ENCODE measurements at regions of chr13 and their contacts with region 1.

Region 1: GRCh38 chr13:45047394-45048310 is 58.3 kb downstream of the GPALPP1 start:
- DNase-seq: peak; percentile 48 to 77 (median 60)
- ATAC-seq: peak; percentile 94
- H3K4me3 ChIP-seq: peak overlapping the region; percentile 38; the same call in 1 of the 2 replicates
- H3K27ac ChIP-seq: no peak overlapping the region
- H3K4me1 ChIP-seq: peaks cover 0 to 4% of the 10 kb centered on the region in 2 experiments; a peak in 3 of 5 replicates
- H3K27me3 ChIP-seq: no peaks in the 10 kb centered on the region
- CTCF ChIP-seq: peak; percentile 69 to 83 (median 82)
- EP300 ChIP-seq: no peak
- POLR2A ChIP-seq: no peak
- RAD21 ChIP-seq: peak; percentile 83 to 91

Region 2: GRCh38 chr13:45119991-45120864 is 72.6 kb after region 1 on chr13 and contains the start of gene GTF2F2:
- CTCF ChIA-PET with region 1: no interaction called
- POLR2A ChIA-PET with region 1: no interaction called
- in situ Hi-C with region 1: no loop called
- intact Hi-C with region 1: loop called (anchors 1 kb)
- DNase-seq: peak; percentile 84 to 88 (median 85)
- ATAC-seq: peak; percentile 84
- H3K4me3 ChIP-seq: peak within 1 kb of the TSS; percentile 87
- H3K27ac ChIP-seq: peak within 1 kb of the TSS; percentile 87
- H3K4me1 ChIP-seq: peaks cover 7 to 14% of the 10 kb centered on the region in 2 experiments; a peak in 3 of 5 replicates
- H3K27me3 ChIP-seq: no peaks in the 10 kb centered on the region
- CTCF ChIP-seq: no peak
- EP300 ChIP-seq: no peak
- POLR2A ChIP-seq: peak; percentile 86
- RAD21 ChIP-seq: no peak
- polyA plus RNA-seq, gene GTF2F2: 19.7 to 22.6 TPM

Region 3: DNA sequence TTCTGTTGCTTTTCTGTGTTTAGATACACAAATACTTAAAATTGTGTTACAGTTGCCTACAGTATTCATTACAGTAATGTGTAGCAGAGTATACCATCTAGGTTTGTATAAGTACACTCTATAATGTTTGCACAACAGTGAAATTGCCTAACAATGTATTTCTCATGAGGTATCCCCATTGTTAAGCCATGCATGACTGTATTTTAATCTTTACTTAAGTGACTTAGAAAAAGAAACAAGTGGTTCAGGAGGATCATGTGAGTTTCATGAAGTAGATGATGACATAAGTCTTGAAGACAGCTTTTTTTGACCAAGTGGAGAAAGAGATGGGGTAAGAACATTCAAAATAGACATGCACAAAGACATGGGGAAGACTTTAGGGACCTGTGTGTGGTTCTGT is 161.6 kb after region 1 on chr13:
- CTCF ChIA-PET with region 1: no interaction called
- POLR2A ChIA-PET with region 1: no interaction called
- in situ Hi-C with region 1: no loop called
- intact Hi-C with region 1: no loop called
- DNase-seq: no peak
- ATAC-seq: no peak
- H3K4me3 ChIP-seq: no peak overlapping the region
- H3K27ac ChIP-seq: no peak overlapping the region
- H3K4me1 ChIP-seq: no peaks in the 10 kb centered on the region
- H3K27me3 ChIP-seq: no peaks in the 10 kb centered on the region
- CTCF ChIP-seq: no peak
- EP300 ChIP-seq: no peak
- POLR2A ChIP-seq: no peak
- RAD21 ChIP-seq: no peak

Region 4: GRCh38 chr13:45280751-45281634 is 233.3 kb after region 1 on chr13:
- CTCF ChIA-PET with region 1: interaction called, 11 read pairs
- POLR2A ChIA-PET with region 1: no interaction called
- in situ Hi-C with region 1: no loop called
- intact Hi-C with region 1: no loop called
- DNase-seq: peak in 2 of 4 experiments; percentile 18 to 20
- ATAC-seq: peak; percentile 65; the same call in 2 of the 3 replicates
- H3K4me3 ChIP-seq: no peak overlapping the region
- H3K27ac ChIP-seq: no peak overlapping the region
- H3K4me1 ChIP-seq: no peaks in the 10 kb centered on the region; a peak in 1 of 5 replicates
- H3K27me3 ChIP-seq: no peaks in the 10 kb centered on the region
- CTCF ChIP-seq: peak; percentile 24 to 40 (median 31); a peak in 3 of 6 replicates
- EP300 ChIP-seq: no peak
- POLR2A ChIP-seq: no peak
- RAD21 ChIP-seq: peak; percentile 21 to 49; a peak in 3 of 4 replicates

Region 5: GRCh38 chr13:45310341-45311125 is 262.9 kb after region 1 on chr13:
- CTCF ChIA-PET with region 1: interaction called, 53 read pairs
- POLR2A ChIA-PET with region 1: interaction called, 3 read pairs
- in situ Hi-C with region 1: loop called (anchors 5 kb)
- intact Hi-C with region 1: loop called (anchors 1 kb)
- DNase-seq: no peak
- ATAC-seq: no peak
- H3K4me3 ChIP-seq: no peak overlapping the region
- H3K27ac ChIP-seq: no peak overlapping the region
- H3K4me1 ChIP-seq: peaks cover 5 to 10% of the 10 kb centered on the region in 2 experiments; a peak in 3 of 5 replicates
- H3K27me3 ChIP-seq: no peaks in the 10 kb centered on the region
- CTCF ChIP-seq: no peak
- EP300 ChIP-seq: no peak
- POLR2A ChIP-seq: no peak
- RAD21 ChIP-seq: no peak

Region 6: GRCh38 chr13:45393941-45394570 is 346.4 kb after region 1 on chr13:
- CTCF ChIA-PET with region 1: no interaction called
- POLR2A ChIA-PET with region 1: no interaction called
- in situ Hi-C with region 1: no loop called
- intact Hi-C with region 1: loop called (anchors 5 kb)
- DNase-seq: peak; percentile 37 to 68 (median 56)
- ATAC-seq: peak; percentile 94
- H3K4me3 ChIP-seq: no peak overlapping the region
- H3K27ac ChIP-seq: no peak overlapping the region
- H3K4me1 ChIP-seq: peaks cover 4% of the 10 kb centered on the region in 2 experiments; a peak in 3 of 5 replicates
- H3K27me3 ChIP-seq: no peaks in the 10 kb centered on the region
- CTCF ChIP-seq: peak; percentile 37 to 75 (median 70); a peak in 5 of 6 replicates
- EP300 ChIP-seq: no peak
- POLR2A ChIP-seq: no peak
- RAD21 ChIP-seq: peak; percentile 8 to 47; a peak in 2 of 4 replicates